Right ventricle myocardium inferior (tissue), 1 donor: ENCODE measurements at regions of chr3 and their contacts with region 1.

Region 1: DNA sequence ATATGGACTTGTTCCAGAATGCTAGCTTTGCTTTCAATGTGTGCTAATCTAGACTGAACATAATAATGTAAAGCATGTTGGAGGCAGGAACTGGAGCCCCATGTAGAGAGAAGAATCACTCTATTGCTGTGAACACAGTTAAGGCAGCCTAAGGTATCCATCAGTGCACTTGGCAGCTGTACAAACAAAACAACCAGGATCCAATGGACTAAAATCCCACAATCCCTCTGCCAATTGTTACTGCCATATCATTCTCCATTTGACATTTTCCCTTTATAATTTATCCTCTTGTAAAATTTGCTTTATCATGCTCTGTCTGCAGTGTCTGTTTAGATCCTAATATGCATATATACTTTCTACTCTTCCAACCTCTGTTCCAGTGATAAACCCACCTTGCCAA is 756.8 kb upstream of the LMCD1 start:
- DNase-seq: no peak
- ATAC-seq: no peak

Region 2: DNA sequence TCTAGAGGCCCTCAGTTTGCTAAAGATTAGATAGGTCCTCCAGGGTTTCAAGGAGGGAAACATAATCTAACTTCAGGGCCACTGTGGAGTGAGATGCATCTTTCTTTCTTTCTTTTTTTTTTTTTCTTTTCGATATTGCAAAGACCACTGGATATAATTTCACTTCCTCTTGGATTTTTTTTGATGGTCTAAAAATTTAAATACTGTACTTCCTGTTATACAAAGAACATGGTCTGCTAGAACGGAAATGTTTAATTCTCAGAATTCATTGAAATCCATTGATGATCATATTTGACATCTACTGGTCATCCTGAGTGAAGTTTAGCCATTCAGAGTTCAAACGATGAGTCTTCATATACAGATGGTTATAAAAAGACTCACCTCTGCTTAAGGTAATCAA is 52.0 kb before region 1 on chr3:
- intact Hi-C with region 1: loop called (anchors 5 kb)
- DNase-seq: no peak
- ATAC-seq: no peak

Region 3: GRCh38 chr3:7977245-7978103 is 232.6 kb after region 1 on chr3:
- intact Hi-C with region 1: no loop called
- DNase-seq: no peak
- ATAC-seq: peak; percentile 60